Adrenal gland (tissue), 19 donors: ENCODE measurements at regions of chr2 and their contacts with region 1.

Region 1: GRCh38 chr2:41698678-41699422 is 349.0 kb upstream of the PKDCC start:
- DNase-seq: peak; percentile 24 to 67 (median 39)
- H3K4me3 ChIP-seq: peak overlapping the region in 1 of 4 donors; percentile 20
- H3K27ac ChIP-seq: no peak overlapping the region
- H3K4me1 ChIP-seq: peaks cover 0 to 4% of the 10 kb centered on the region in 2 donors
- H3K27me3 ChIP-seq: no peaks in the 10 kb centered on the region
- CTCF ChIP-seq: peak; percentile 71 to 89 (median 82)
- POLR2A ChIP-seq: no peak

Region 2: DNA sequence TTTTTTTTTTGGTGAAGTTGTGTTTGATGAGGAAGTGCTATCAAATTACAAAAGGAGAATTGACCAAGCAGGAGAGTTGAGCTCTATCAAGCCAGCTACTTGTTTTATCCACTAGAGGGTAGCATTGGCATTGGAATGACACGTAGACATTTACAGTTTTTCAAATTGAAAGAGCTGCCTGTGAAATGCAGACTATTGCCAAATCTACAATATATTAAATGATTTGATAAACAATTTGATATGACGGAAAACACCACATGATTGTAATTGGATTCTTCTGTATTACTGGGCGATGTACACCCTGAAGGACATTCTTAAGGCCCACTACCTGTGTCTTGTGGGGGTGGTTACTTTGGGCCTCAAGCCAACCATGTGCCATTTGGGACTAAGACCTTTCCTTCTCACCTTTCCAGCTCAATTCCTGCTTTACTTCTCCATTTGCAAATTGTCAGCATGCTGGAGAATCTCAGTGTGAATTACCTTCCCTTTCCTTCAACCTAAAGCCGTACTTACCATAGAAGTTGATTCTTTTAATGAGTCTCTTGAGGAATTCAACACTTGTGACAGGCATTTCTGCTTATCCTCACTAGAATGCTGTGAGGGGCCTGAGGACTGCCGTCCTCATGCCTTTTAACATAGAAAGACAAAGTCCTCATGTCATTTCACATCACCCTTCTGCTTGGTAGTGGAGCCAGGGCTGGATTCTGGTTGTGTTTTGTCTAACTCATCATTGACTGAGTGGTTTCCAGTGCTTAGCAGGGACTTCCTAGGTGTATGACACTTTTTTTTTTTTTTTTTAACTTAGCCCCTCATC is 1785.0 kb before region 1 on chr2:
- intact Hi-C with region 1: loop called in 1 of 2 experiments (anchors 10 kb)
- DNase-seq: peak in 1 of 7 donors; percentile 20
- H3K4me3 ChIP-seq: no peak overlapping the region
- H3K27ac ChIP-seq: no peak overlapping the region
- H3K4me1 ChIP-seq: no peaks in the 10 kb centered on the region
- H3K27me3 ChIP-seq: no peaks in the 10 kb centered on the region
- CTCF ChIP-seq: peak; percentile 71 to 84 (median 80)
- POLR2A ChIP-seq: no peak

Region 3: DNA sequence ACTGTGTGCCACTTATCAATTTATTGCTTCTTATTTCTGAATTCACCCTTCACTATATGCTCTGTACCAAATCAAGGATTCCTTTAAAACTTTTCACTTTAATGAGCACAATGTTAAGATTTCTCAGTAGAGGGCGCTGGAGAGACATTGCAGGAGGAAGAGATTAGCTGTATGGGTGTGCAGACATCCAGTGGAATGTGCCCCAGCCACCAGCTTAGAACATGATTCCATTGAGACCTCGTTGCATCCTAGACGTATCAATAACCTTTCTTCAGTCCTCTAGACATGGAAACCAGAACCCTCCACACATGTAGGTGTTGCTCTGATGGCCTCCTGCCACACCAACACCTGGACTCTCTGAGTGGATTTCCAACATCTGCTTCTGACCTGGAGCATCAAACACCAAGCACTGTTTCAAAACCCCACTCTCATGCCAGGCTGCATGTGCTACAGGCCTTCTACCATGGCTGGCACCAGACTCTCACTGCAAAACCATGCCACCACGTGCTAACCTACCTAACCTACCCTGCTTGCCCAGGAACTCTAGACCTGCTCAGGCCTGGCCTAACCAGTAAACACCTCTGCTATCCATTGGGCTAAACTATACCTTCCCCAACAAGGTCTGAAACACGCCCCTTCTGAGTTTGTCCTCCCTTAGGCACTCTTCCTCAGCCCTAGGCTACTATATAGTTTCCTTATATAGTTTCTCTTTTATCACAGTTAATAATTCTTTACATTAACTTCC is 284.2 kb before region 1 on chr2:
- intact Hi-C with region 1: loop called (anchors 2 to 10 kb)
- DNase-seq: peak in 5 of 7 donors; percentile 15 to 51 (median 29)
- H3K4me3 ChIP-seq: no peak overlapping the region
- H3K27ac ChIP-seq: no peak overlapping the region
- H3K4me1 ChIP-seq: no peaks in the 10 kb centered on the region
- H3K27me3 ChIP-seq: no peaks in the 10 kb centered on the region
- CTCF ChIP-seq: peak; percentile 50 to 70 (median 62)
- POLR2A ChIP-seq: no peak

Region 4: GRCh38 chr2:41782306-41783158 is 83.7 kb after region 1 on chr2:
- intact Hi-C with region 1: loop called in 1 of 2 experiments (anchors 5 kb)
- DNase-seq: peak in 5 of 7 donors; percentile 13 to 57 (median 23)
- H3K4me3 ChIP-seq: no peak overlapping the region
- H3K27ac ChIP-seq: no peak overlapping the region
- H3K4me1 ChIP-seq: no peaks in the 10 kb centered on the region
- H3K27me3 ChIP-seq: no peaks in the 10 kb centered on the region
- CTCF ChIP-seq: peak; percentile 75 to 88 (median 86)
- POLR2A ChIP-seq: no peak